ENCODE measurements at regions of chr1 and their contacts with region 1.

Region 1: GRCh38 chr1:40385437-40386358 is 12.2 kb downstream of the SMAP2 start:
- DNase-seq: peak; percentile 90 to 95 (median 93)
- H3K4me3 ChIP-seq: peak overlapping the region; percentile 45 to 67
- H3K4me3 Mint-ChIP-seq: peak overlapping the region; percentile 78 to 94 (median 87)
- H3K27ac ChIP-seq: peak overlapping the region; percentile 99
- H3K27ac Mint-ChIP-seq: peak overlapping the region; percentile 95 to 100 (median 99)
- H3K4me1 ChIP-seq: peaks cover 97% of the 10 kb centered on the region
- H3K4me1 Mint-ChIP-seq: peaks cover 75 to 95% (median 85%) of the 10 kb centered on the region in 4 donors
- H3K27me3 ChIP-seq: no peaks in the 10 kb centered on the region
- H3K27me3 Mint-ChIP-seq: no peaks in the 10 kb centered on the region

Region 2: GRCh38 chr1:40161125-40161887 is 224.4 kb before region 1 on chr1 and contains the start of gene RLF:
- CTCF ChIA-PET with region 1: no interaction called
- POLR2A ChIA-PET with region 1: interaction called, 15 read pairs
- intact Hi-C with region 1: no loop called
- DNase-seq: peak; percentile 93 to 95 (median 94)
- H3K4me3 ChIP-seq: peak within 1 kb of the TSS; percentile 77 to 94
- H3K4me3 Mint-ChIP-seq: peak within 1 kb of the TSS in 1 of 8 donors; percentile 60
- H3K27ac ChIP-seq: peak within 1 kb of the TSS; percentile 97
- H3K27ac Mint-ChIP-seq: peak within 1 kb of the TSS in 1 of 7 donors; percentile 99
- H3K4me1 ChIP-seq: peaks cover 49% of the 10 kb centered on the region
- H3K4me1 Mint-ChIP-seq: peaks cover 8 to 29% (median 19%) of the 10 kb centered on the region in 4 donors
- H3K27me3 ChIP-seq: no peaks in the 10 kb centered on the region
- H3K27me3 Mint-ChIP-seq: no peaks in the 10 kb centered on the region
- total RNA-seq, gene RLF: 23.0 to 23.4 TPM

Region 3: GRCh38 chr1:40344597-40344996 is 41.1 kb before region 1 on chr1:
- CTCF ChIA-PET with region 1: interaction called, 35 read pairs
- POLR2A ChIA-PET with region 1: interaction called, 12 read pairs
- intact Hi-C with region 1: loop called (anchors 5 kb)
- DNase-seq: no peak
- H3K4me3 ChIP-seq: no peak overlapping the region
- H3K4me3 Mint-ChIP-seq: peak overlapping the region in 6 of 8 donors; percentile 22 to 53 (median 42)
- H3K27ac ChIP-seq: no peak overlapping the region
- H3K27ac Mint-ChIP-seq: peak overlapping the region in 5 of 7 donors; percentile 5 to 67 (median 9)
- H3K4me1 ChIP-seq: peaks cover 33% of the 10 kb centered on the region
- H3K4me1 Mint-ChIP-seq: peaks cover 24 to 52% (median 38%) of the 10 kb centered on the region in 4 donors
- H3K27me3 ChIP-seq: no peaks in the 10 kb centered on the region
- H3K27me3 Mint-ChIP-seq: no peaks in the 10 kb centered on the region

Region 4: GRCh38 chr1:40373338-40374283 is 12.1 kb before region 1 on chr1 and contains the start of gene SMAP2:
- CTCF ChIA-PET with region 1: interaction called, 56 read pairs
- POLR2A ChIA-PET with region 1: interaction called, 287 read pairs
- intact Hi-C with region 1: loop called (anchors 1 kb)
- DNase-seq: peak; percentile 94 to 96 (median 96)
- H3K4me3 ChIP-seq: peak within 1 kb of the TSS; percentile 84 to 90
- H3K4me3 Mint-ChIP-seq: peak within 1 kb of the TSS; percentile 98 to 100 (median 99)
- H3K27ac ChIP-seq: peak within 1 kb of the TSS; percentile 96
- H3K27ac Mint-ChIP-seq: peak within 1 kb of the TSS; percentile 97 to 100 (median 99)
- H3K4me1 ChIP-seq: peaks cover 45% of the 10 kb centered on the region
- H3K4me1 Mint-ChIP-seq: peaks cover 31 to 67% (median 49%) of the 10 kb centered on the region in 4 donors
- H3K27me3 ChIP-seq: no peaks in the 10 kb centered on the region
- H3K27me3 Mint-ChIP-seq: peaks cover 0 to 6% of the 10 kb centered on the region in 2 donors
- total RNA-seq, gene SMAP2: 123 TPM

Region 5: GRCh38 chr1:40421431-40422384 is 36.0 kb after region 1 on chr1:
- CTCF ChIA-PET with region 1: no interaction called
- POLR2A ChIA-PET with region 1: no interaction called
- intact Hi-C with region 1: no loop called
- DNase-seq: no peak
- H3K4me3 ChIP-seq: no peak overlapping the region
- H3K4me3 Mint-ChIP-seq: no peak overlapping the region
- H3K27ac ChIP-seq: no peak overlapping the region
- H3K27ac Mint-ChIP-seq: peak overlapping the region in 3 of 7 donors; percentile 27 to 77 (median 49)
- H3K4me1 ChIP-seq: no peaks in the 10 kb centered on the region
- H3K4me1 Mint-ChIP-seq: peaks cover 6 to 16% (median 10%) of the 10 kb centered on the region in 4 donors
- H3K27me3 ChIP-seq: no peaks in the 10 kb centered on the region
- H3K27me3 Mint-ChIP-seq: no peaks in the 10 kb centered on the region

Region 6: DNA sequence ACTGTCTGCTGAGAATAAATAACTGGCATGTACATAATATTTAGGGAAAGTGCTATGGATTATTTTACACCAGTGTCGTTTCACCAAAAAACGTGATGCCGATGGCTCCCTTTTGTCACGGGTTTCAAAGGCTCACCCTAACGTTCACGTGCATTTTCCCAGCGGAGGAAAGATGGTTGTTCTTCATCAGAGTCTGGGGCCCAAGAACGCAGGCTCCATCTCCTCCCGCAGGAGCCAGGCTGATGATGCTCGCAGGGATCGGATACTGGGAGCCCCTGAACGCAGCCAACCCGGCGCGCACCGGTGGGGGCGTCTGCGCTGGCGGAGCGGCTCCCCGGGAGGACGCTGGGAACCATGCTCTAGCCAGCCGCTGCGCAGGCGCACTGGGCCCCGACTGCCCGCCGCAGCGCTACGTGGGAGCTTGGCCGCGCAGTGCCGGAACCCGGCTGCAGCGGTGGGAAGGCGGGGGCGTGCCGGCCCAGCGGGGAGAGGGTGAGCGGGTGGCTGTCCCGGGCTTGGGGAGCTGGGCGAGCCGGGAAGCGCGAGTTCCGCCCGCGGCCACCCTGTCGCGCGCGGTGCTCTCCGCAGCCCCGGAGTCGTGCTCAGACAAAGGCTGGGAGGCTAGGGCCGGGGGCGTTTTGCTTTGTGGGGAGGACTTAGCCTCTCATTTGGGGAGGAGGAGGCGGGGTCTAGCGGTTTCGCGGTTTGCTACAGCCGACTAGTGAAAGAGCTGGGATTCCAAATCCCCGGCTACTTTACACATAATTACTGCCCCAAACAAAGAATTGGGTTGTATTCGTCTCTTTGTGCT is 64.2 kb after region 1 on chr1 and contains the start of gene ZFP69B:
- CTCF ChIA-PET with region 1: no interaction called
- POLR2A ChIA-PET with region 1: interaction called, 3 read pairs
- intact Hi-C with region 1: loop called (anchors 5 kb)
- DNase-seq: peak; percentile 81 to 86 (median 82)
- H3K4me3 ChIP-seq: peak within 1 kb of the TSS; percentile 75 to 82
- H3K4me3 Mint-ChIP-seq: peak within 1 kb of the TSS; percentile 86 to 96 (median 93)
- H3K27ac ChIP-seq: peak within 1 kb of the TSS; percentile 55
- H3K27ac Mint-ChIP-seq: peak within 1 kb of the TSS; percentile 76 to 95 (median 89)
- H3K4me1 ChIP-seq: peaks cover 18% of the 10 kb centered on the region
- H3K4me1 Mint-ChIP-seq: peaks cover 18 to 25% (median 21%) of the 10 kb centered on the region in 4 donors
- H3K27me3 ChIP-seq: no peaks in the 10 kb centered on the region
- H3K27me3 Mint-ChIP-seq: no peaks in the 10 kb centered on the region
- total RNA-seq, gene ZFP69B: 7.5 to 7.9 TPM

Measured in CD4-positive, alpha-beta memory T cell (primary cell).